Activated CD4-positive, alpha-beta T cell treated with anti-CD3 and anti-CD28 coated beads for 36 hours (primary cell): ENCODE measurements at regions of chr9 and their contacts with region 1.

Region 1: GRCh38 chr9:83980395-83981125 is at the start of gene RMI1:
- DNase-seq: peak; percentile 100
- ATAC-seq: peak; percentile 78
- H3K4me3 Mint-ChIP-seq: peak within 1 kb of the TSS; percentile 100
- H3K27ac Mint-ChIP-seq: peak within 1 kb of the TSS; percentile 99
- H3K4me1 Mint-ChIP-seq: peaks cover 37% of the 10 kb centered on the region
- H3K27me3 Mint-ChIP-seq: no peaks in the 10 kb centered on the region
- total RNA-seq, gene RMI1: 25.0 to 25.5 TPM

Region 2: DNA sequence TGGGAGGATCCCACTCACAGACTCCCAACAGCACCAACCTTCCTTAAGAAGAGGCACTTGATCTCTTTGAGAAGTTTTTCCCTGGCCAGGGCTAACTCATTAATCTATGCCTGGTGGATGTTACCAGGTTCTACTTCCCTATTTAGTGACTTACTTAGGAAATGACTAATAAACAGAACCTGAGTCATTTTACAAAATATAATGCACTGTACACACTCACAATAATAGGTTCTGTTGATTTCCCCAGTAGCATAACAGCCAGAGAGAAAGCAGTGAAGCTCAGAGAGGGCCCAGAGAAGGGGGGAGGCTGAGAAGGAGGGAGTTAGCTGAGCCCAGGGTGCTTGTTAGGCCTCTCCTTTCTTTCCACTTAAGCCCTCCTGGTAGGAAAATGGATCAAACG is 469.5 kb before region 1 on chr9:
- CTCF ChIA-PET with region 1: no interaction called
- POLR2A ChIA-PET with region 1: no interaction called
- intact Hi-C with region 1: no loop called
- DNase-seq: no peak
- ATAC-seq: peak; percentile 60
- H3K4me3 Mint-ChIP-seq: no peak overlapping the region
- H3K27ac Mint-ChIP-seq: no peak overlapping the region
- H3K4me1 Mint-ChIP-seq: peaks cover 7% of the 10 kb centered on the region
- H3K27me3 Mint-ChIP-seq: no peaks in the 10 kb centered on the region

Region 3: GRCh38 chr9:83622939-83623678 is 357.5 kb before region 1 on chr9 and contains the start of gene IDNK:
- CTCF ChIA-PET with region 1: interaction called, 6 read pairs
- POLR2A ChIA-PET with region 1: interaction called, 3 read pairs
- intact Hi-C with region 1: loop called in 1 of 2 experiments (anchors 1 kb)
- DNase-seq: peak; percentile 77
- ATAC-seq: peak; percentile 89
- H3K4me3 Mint-ChIP-seq: peak within 1 kb of the TSS; percentile 80
- H3K27ac Mint-ChIP-seq: peak within 1 kb of the TSS; percentile 98
- H3K4me1 Mint-ChIP-seq: peaks cover 23% of the 10 kb centered on the region
- H3K27me3 Mint-ChIP-seq: no peaks in the 10 kb centered on the region
- total RNA-seq, gene IDNK: 4.6 to 4.7 TPM

Region 4: DNA sequence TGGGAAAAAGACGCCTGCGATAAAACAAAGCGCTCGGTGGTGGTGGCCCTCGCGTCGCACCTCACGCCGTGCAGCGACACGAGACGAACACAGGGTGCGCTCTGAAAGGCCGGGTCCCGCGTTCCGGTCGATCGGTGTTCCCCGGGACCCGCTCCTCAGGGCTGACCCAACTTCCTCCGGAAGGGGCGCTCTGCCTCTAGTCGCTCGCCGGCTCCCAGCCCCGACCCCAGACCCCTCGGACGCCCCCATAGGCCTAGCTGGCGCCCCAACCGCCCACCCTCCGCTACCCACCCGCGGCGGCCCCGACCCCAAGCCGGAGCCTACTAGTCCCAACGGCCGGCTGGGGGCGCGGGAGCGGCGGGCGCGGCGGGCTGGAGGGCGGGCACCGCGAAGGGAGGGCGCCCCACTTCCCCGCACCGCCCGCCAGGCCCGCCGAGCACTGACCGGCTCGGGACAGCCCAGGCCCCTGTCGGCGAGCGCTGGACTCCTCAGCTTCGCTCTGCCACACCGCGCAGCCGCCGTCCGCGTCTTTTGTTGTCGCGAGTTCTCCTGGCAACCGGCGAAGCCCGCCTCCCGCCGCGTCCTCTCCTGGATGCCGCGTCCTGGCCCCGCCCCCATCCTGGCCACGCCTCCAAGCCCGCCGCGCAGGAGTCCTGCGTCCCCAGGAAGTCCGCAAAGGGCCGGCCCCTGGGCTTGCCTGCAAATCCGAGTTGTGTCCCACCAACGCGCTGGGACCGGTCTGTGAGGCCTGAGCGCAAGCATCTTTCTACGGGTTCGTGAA is 59.4 kb before region 1 on chr9 and contains the start of gene KIF27:
- CTCF ChIA-PET with region 1: interaction called, 6 read pairs
- POLR2A ChIA-PET with region 1: interaction called, 12 read pairs
- intact Hi-C with region 1: loop called (anchors 1 kb)
- DNase-seq: peak; percentile 98
- ATAC-seq: peak; percentile 87
- H3K4me3 Mint-ChIP-seq: peak within 1 kb of the TSS; percentile 83
- H3K27ac Mint-ChIP-seq: peak within 1 kb of the TSS; percentile 88
- H3K4me1 Mint-ChIP-seq: peaks cover 12% of the 10 kb centered on the region
- H3K27me3 Mint-ChIP-seq: no peaks in the 10 kb centered on the region
- total RNA-seq, gene KIF27: 3.2 to 3.4 TPM

Region 5: DNA sequence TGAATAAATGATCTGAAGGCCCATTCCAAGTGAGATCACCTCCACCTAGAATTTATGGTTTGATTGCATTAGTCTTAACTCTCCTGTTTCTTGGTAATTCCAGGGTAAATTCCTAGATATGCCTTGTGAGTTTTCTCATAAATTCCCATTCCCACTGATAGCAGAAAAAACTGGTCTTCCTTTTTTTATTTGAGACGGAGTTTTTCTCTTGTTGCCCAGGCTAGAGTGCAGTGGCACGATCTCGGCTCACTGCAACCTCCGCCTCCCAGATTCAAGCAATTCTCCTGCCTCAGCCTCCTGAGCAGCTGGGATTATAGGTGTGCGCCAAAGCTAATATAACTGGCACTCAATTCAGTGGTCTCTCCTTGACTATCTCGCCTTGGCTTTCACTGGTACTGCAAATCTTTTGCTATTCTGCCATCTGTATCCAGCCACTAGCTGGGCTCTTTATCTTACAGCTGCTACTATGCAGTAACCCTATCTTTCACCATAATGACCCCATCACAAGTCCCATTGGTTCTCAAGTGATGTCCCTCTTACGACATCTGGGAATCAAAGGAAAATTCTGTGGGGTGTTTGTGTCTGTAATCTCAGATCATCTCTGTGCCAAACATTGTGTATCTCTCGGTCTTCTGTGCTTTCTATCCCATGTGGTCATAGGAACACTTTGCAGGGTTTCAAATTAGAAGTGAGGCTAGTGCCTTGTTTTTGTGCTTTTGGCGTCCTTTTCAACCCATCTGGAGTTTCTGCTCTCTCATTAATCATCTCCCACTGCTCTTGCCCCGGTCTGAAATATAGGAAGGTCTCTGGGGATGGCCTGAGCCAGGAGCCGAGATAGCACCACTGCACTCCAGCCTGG is 15.0 kb before region 1 on chr9:
- CTCF ChIA-PET with region 1: interaction called, 5 read pairs
- POLR2A ChIA-PET with region 1: interaction called, 11 read pairs
- intact Hi-C with region 1: loop called (anchors 1 to 2 kb)
- DNase-seq: no peak
- ATAC-seq: peak; percentile 27
- H3K4me3 Mint-ChIP-seq: no peak overlapping the region
- H3K27ac Mint-ChIP-seq: peak overlapping the region; percentile 74
- H3K4me1 Mint-ChIP-seq: peaks cover 5% of the 10 kb centered on the region
- H3K27me3 Mint-ChIP-seq: no peaks in the 10 kb centered on the region

Region 6: DNA sequence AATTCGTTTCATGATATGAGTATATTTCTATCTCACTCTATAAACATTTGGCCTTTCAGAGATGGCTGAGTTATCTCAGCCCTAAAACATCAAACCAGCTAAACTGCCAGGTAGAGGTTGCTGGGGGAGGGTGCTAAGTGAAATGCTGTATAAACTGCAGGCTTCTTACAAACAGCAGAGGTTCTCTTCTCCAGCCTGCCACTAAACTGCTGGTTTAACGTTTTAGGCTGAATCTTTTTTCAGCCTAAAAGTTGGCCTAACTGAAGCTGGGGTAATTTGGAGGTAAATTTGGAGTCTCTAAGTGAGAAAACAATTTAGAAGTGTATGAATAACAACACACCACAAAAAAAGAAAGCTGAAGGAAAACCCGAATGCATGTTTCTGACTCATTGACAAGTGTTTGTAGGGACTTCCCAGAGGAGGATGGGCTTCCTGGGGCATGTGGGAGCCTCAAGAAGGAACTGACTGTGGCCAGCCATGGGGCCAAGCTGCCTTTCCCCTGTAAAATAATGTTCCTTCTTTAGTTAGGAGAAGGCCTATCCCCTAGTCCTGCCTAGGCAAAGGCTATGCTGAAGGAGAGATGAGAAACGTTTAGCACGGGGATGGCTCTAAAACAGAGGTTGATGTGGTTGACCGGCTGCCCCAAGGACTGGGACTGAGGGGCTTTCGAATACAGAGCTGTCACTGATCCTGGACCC is 315.7 kb after region 1 on chr9:
- CTCF ChIA-PET with region 1: no interaction called
- POLR2A ChIA-PET with region 1: interaction called, 4 read pairs
- intact Hi-C with region 1: loop called (anchors 1 kb)
- DNase-seq: peak; percentile 79
- ATAC-seq: peak; percentile 82
- H3K4me3 Mint-ChIP-seq: peak overlapping the region; percentile 46
- H3K27ac Mint-ChIP-seq: peak overlapping the region; percentile 98
- H3K4me1 Mint-ChIP-seq: peaks cover 60% of the 10 kb centered on the region
- H3K27me3 Mint-ChIP-seq: no peaks in the 10 kb centered on the region

Region 7: GRCh38 chr9:85940832-85941621 is 1960.5 kb after region 1 on chr9 and contains the start of gene NAA35:
- CTCF ChIA-PET with region 1: no interaction called
- POLR2A ChIA-PET with region 1: no interaction called
- intact Hi-C with region 1: loop called in 1 of 2 experiments (anchors 2 kb)
- DNase-seq: peak; percentile 99
- ATAC-seq: peak; percentile 88
- H3K4me3 Mint-ChIP-seq: no peak within 1 kb of the TSS
- H3K27ac Mint-ChIP-seq: peak within 1 kb of the TSS; percentile 95
- H3K4me1 Mint-ChIP-seq: peaks cover 8% of the 10 kb centered on the region
- H3K27me3 Mint-ChIP-seq: no peaks in the 10 kb centered on the region
- total RNA-seq, gene NAA35: 24.9 to 25.8 TPM